ENCODE measurements at regions of chr20 and their contacts with region 1.

Region 1: GRCh38 chr20:34363062-34363464 is at the start of gene ITCH:
- DNase-seq: peak; percentile 99
- H3K4me3 ChIP-seq: peak within 1 kb of the TSS; percentile 69 to 96 (median 92)
- H3K27ac ChIP-seq: peak within 1 kb of the TSS; percentile 90 to 97 (median 93)
- H3K4me1 ChIP-seq: peaks cover 41 to 47% (median 46%) of the 10 kb centered on the region in 4 donors
- H3K27me3 ChIP-seq: no peaks in the 10 kb centered on the region
- CTCF ChIP-seq: peak in 1 of 3 experiments; percentile 15
- EP300 ChIP-seq: no peak
- POLR2A ChIP-seq: peak; percentile 84
- total RNA-seq, gene ITCH: 50.3 to 64.3 (median 52.8) TPM

Region 2: GRCh38 chr20:34302723-34303528 is 60.1 kb before region 1 on chr20 and contains the start of gene AHCY:
- intact Hi-C with region 1: loop called (anchors 5 kb)
- DNase-seq: peak; percentile 99
- H3K4me3 ChIP-seq: peak within 1 kb of the TSS; percentile 73 to 86 (median 77)
- H3K27ac ChIP-seq: peak within 1 kb of the TSS; percentile 88 to 97 (median 92)
- H3K4me1 ChIP-seq: peaks cover 16 to 25% (median 20%) of the 10 kb centered on the region in 4 donors
- H3K27me3 ChIP-seq: no peaks in the 10 kb centered on the region
- CTCF ChIP-seq: peak in 1 of 3 experiments; percentile 3
- EP300 ChIP-seq: no peak
- POLR2A ChIP-seq: peak; percentile 43
- total RNA-seq, gene AHCY: 52.7 to 77.0 (median 71.0) TPM

Measured in esophagus muscularis mucosa (tissue), 4 donors.